ENCODE measurements at regions of chr15 and their contacts with region 1.

Region 1: DNA sequence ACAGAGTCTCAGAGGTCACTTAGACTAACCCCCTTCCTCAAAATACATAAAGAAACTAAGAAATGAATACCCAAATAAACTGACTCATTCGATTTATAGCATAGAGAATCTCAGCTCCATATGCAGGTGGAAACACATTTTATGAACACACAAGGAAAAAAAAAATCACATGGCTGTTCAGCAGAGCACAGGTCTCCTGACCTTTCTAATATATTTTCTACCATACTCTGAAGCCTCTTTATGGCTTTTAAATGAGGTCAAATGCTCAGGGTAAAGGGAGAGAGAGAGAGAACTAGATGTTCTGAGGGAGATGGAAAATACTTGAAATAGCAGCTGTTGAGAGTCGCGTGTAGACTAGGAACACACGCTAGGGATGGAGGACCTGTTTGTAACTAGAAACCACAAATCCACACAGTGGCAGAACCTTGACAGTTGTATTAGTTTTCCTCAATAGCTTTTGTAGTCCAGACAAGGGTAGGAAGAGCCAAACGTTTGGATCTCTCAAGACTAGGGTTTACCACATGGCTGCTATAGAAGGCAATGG is 165.3 kb downstream of the FMN1 start:
- DNase-seq: no peak
- H3K4me3 Mint-ChIP-seq: no peak overlapping the region
- H3K27ac Mint-ChIP-seq: no peak overlapping the region
- H3K4me1 Mint-ChIP-seq: no peaks in the 10 kb centered on the region
- H3K27me3 Mint-ChIP-seq: no peaks in the 10 kb centered on the region

Region 2: DNA sequence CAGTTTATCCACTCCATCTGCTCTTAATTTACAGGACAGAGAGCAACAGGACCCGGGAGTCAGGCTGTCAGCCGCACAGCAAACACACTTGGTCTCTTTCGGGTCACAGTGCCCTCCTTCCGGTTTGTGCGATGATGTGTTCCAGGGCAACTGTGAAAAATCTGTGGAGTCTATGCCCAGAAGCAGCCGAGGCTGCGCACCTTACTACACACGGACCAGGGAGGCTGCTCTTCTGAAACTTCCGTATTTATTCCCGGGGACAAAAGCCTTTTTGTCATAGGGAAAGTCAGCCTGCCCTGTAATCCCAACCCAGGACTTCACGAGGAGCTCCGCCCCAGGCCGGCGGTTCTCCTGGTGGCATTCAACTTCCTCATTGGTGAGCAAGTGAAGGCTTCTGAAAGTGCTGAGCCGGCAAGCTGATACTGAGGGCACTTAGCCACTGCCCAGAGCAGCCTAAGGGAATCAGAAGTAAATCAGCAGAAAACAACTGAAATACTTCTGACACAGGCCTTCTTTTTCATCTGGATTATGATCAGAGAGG is 38.8 kb after region 1 on chr15:
- CTCF ChIA-PET with region 1: no interaction called
- intact Hi-C with region 1: loop called (anchors 5 kb)
- DNase-seq: peak; percentile 10
- H3K4me3 Mint-ChIP-seq: peak overlapping the region; percentile 22
- H3K27ac Mint-ChIP-seq: no peak overlapping the region
- H3K4me1 Mint-ChIP-seq: peaks cover 9% of the 10 kb centered on the region
- H3K27me3 Mint-ChIP-seq: peaks cover 5% of the 10 kb centered on the region

Measured in activated naive CD4-positive, alpha-beta T cell treated with anti-CD3 and anti-CD28 coated beads for 36 hours (primary cell).